Lower lobe of right lung (tissue), 2 donors: ENCODE measurements at regions of chr3 and their contacts with region 1.

Region 1: DNA sequence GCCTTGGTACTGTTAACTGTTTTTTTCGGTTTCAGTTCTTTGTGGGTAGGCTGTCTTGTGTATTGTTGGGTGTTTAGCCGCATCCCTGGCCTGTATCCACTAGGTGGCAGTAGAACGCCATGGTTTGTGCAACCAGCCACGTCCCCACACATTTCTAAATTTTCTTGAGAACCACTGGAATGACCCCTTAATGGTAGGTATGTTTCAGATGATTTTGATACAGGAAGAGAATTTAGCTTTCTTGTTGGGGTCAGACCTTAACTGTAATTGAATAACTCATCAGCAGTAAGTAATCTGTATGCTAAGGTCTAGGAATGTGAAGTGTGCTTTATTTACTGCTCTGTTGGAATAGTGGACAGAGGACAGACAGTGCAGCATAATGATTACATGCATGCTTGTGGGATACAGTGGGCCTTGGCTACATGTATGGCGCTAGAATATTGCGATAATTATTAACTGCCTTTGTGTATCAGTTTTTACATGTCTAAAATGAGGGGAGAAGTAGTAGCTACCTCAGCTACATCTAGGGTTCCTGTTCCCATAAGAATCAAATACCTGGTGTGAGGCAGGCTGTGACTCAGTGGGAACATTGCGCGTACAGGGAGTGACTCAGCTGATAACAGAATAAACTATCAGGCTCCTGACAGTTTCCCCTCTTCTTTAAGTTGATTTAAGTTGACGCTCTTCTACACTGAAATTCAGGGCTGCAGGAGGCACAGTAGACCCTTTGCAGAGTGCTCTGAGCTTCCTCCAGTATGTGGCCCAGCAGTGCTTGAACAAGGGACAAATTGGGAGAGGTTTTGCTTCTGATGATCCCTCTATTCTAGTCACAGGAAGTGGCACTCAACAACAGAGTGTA is 25.0 kb upstream of the GPR171 start:
- DNase-seq: peak; percentile 62
- ATAC-seq: peak; percentile 93
- H3K4me3 ChIP-seq: no peak overlapping the region
- H3K27ac ChIP-seq: no peak overlapping the region
- H3K4me1 ChIP-seq: peaks cover 18% of the 10 kb centered on the region
- H3K27me3 ChIP-seq: no peaks in the 10 kb centered on the region
- CTCF ChIP-seq: peak; percentile 92

Region 2: DNA sequence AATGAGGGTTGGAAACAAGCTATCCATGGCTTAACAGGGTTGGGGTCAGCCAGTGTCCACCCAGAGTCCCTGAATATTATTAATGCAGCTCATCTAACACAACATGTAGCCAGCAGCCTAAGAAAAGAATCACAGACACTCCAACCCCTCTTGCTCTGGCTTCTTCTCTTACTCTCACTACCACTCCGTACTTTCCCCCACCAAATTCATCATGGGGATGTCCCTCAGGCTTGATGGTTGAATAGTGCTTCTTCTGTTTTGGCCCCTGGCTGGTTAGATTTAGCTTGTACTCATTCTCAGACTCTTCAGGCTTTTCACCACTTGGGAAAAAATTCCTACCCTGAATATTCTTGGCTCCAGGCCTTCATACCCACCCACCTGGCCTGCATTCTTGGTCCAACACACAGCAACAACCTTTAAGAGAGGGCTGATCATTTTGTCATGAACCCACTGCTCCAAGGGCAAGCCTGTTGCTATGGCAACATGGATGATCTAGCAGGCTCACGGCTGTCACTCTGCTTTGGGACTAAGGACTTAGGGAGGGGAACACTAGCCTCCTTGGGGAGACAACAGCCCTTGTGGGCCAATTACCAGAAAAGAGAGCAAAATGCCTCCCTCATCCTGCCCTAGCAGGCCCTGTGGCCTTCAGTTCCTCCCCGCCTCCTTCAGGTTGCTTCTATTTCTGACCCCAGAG is 152.0 kb before region 1 on chr3:
- intact Hi-C with region 1: no loop called
- DNase-seq: no peak
- ATAC-seq: no peak
- H3K4me3 ChIP-seq: no peak overlapping the region
- H3K27ac ChIP-seq: no peak overlapping the region
- H3K4me1 ChIP-seq: no peaks in the 10 kb centered on the region
- H3K27me3 ChIP-seq: peaks cover 6% of the 10 kb centered on the region
- CTCF ChIP-seq: no peak

Region 3: GRCh38 chr3:151276687-151277042 is 48.6 kb after region 1 on chr3:
- intact Hi-C with region 1: loop called (anchors 5 kb)
- DNase-seq: no peak
- ATAC-seq: no peak
- H3K4me3 ChIP-seq: no peak overlapping the region
- H3K27ac ChIP-seq: no peak overlapping the region
- H3K4me1 ChIP-seq: no peaks in the 10 kb centered on the region
- H3K27me3 ChIP-seq: no peaks in the 10 kb centered on the region
- CTCF ChIP-seq: no peak

Region 4: GRCh38 chr3:151316267-151316991 is 88.4 kb after region 1 on chr3 and contains the start of gene GPR87:
- intact Hi-C with region 1: no loop called
- DNase-seq: no peak
- ATAC-seq: no peak
- H3K4me3 ChIP-seq: no peak within 1 kb of the TSS
- H3K27ac ChIP-seq: no peak within 1 kb of the TSS
- H3K4me1 ChIP-seq: peaks cover 4% of the 10 kb centered on the region
- H3K27me3 ChIP-seq: no peaks in the 10 kb centered on the region
- CTCF ChIP-seq: no peak
- total RNA-seq, gene GPR87: 0.24 TPM